ENCODE measurements at regions of chr14 and their contacts with region 1.

Region 1: GRCh38 chr14:100375963-100376735 is 53.0 kb downstream of the SLC25A47 start:
- DNase-seq: peak; percentile 96
- ATAC-seq: peak; percentile 70
- H3K4me3 Mint-ChIP-seq: peak within 1 kb of the TSS; percentile 99
- H3K27ac Mint-ChIP-seq: peak within 1 kb of the TSS; percentile 98
- H3K4me1 Mint-ChIP-seq: peaks cover 37% of the 10 kb centered on the region
- H3K27me3 Mint-ChIP-seq: no peaks in the 10 kb centered on the region

Region 2: GRCh38 chr14:99480917-99481744 is 895.0 kb before region 1 on chr14 and contains the start of gene CCNK:
- CTCF ChIA-PET with region 1: no interaction called
- POLR2A ChIA-PET with region 1: no interaction called
- intact Hi-C with region 1: loop called (anchors 2 to 10 kb)
- DNase-seq: peak; percentile 100
- ATAC-seq: peak; percentile 95
- H3K4me3 Mint-ChIP-seq: peak within 1 kb of the TSS; percentile 97
- H3K27ac Mint-ChIP-seq: peak within 1 kb of the TSS; percentile 96
- H3K4me1 Mint-ChIP-seq: peaks cover 58% of the 10 kb centered on the region
- H3K27me3 Mint-ChIP-seq: no peaks in the 10 kb centered on the region
- total RNA-seq, gene CCNK: 93.7 to 96.2 TPM

Region 3: GRCh38 chr14:99971087-99971940 is 404.8 kb before region 1 on chr14:
- CTCF ChIA-PET with region 1: no interaction called
- POLR2A ChIA-PET with region 1: no interaction called
- intact Hi-C with region 1: loop called in 1 of 2 experiments (anchors 1 kb)
- DNase-seq: peak; percentile 93
- ATAC-seq: peak; percentile 87
- H3K4me3 Mint-ChIP-seq: peak overlapping the region; percentile 98
- H3K27ac Mint-ChIP-seq: no peak overlapping the region
- H3K4me1 Mint-ChIP-seq: peaks cover 21% of the 10 kb centered on the region
- H3K27me3 Mint-ChIP-seq: peaks cover 21% of the 10 kb centered on the region

Region 4: GRCh38 chr14:99982537-99983250 is 393.5 kb before region 1 on chr14:
- CTCF ChIA-PET with region 1: no interaction called
- POLR2A ChIA-PET with region 1: no interaction called
- intact Hi-C with region 1: no loop called
- DNase-seq: peak; percentile 77
- ATAC-seq: peak; percentile 94
- H3K4me3 Mint-ChIP-seq: no peak overlapping the region
- H3K27ac Mint-ChIP-seq: peak overlapping the region; percentile 9
- H3K4me1 Mint-ChIP-seq: peaks cover 14% of the 10 kb centered on the region
- H3K27me3 Mint-ChIP-seq: no peaks in the 10 kb centered on the region

Region 5: DNA sequence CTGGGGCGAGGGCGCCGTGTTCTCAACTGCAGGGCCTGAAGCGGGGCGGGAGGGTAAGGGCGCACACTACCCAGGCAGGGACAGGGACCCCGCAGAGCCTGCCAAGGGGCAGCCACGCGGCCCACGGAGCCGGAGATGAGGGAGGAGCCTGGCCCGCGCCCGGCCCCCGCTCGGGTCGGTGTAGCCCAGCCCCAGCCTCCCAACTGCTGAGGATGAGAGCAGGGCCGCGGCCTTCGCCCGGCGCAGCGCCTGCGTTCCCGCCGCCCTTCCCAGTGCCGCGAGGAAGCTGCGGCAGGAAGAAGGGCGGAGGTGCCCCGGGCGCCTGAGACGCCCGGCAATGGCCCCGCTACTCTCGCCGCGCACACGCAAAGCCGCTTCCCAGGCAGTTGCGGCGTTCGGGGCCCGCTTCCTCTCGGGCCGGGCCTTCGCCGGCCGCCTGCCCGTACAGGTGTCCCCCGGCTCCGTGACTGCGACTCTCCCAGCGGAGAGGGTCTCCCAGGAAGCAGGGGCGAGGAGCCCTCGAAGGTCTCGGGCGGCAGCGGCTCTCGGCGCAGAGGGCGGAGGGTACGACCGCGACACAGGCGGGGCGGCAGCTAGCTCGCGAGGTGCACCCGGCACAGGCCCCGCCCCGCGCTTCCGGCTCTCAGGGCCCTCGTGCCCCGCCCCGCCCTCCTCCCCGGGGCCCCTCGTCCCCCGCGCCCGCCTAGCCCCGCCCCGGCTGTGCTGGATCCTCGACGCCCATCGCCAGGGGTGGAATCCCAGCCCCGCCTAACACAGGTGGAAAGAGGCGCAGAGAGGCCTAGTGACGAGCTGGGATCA is 162.0 kb before region 1 on chr14:
- CTCF ChIA-PET with region 1: interaction called, 4 read pairs
- POLR2A ChIA-PET with region 1: no interaction called
- intact Hi-C with region 1: loop called in 1 of 2 experiments (anchors 1 kb)
- DNase-seq: peak; percentile 97
- ATAC-seq: peak; percentile 96
- H3K4me3 Mint-ChIP-seq: peak overlapping the region; percentile 79
- H3K27ac Mint-ChIP-seq: peak overlapping the region; percentile 87
- H3K4me1 Mint-ChIP-seq: peaks cover 23% of the 10 kb centered on the region
- H3K27me3 Mint-ChIP-seq: no peaks in the 10 kb centered on the region

Region 6: DNA sequence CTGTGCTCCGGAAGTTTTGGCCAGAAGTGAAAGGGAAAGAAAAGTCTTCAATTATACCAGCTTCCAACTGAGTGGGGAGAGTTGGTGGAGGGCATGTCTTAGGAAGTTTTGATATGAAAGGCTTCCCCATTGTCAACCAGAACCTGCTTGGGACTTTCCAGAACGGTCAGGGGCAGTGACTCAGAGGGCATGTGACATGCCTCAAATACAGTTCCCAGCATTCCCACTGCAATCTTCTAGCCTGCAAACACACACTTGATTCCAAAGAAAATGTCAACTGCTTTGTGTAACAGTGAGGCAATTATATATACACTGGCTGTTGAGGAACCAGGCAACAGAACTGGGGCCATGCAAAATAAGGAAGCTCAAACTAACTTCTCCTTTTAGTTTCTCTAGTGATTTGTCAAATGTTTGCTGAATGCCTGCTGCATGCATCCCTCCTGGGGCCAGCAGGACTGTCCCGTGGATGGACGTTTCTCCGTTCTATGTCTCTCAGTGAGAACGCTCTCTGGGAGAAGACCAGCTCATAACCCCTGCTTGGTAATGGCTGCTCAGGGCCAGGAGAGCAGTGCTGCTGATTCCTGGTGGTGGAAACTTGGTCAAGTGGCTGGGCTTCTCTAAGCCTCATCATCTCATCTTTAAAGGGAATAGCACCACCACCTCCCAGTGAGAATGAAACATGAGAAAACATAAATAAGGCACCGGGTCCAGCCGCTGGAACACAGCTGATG is 34.7 kb before region 1 on chr14:
- CTCF ChIA-PET with region 1: no interaction called
- POLR2A ChIA-PET with region 1: interaction called, 4 read pairs
- intact Hi-C with region 1: loop called (anchors 5 kb)
- DNase-seq: peak; percentile 61
- ATAC-seq: peak; percentile 68
- H3K4me3 Mint-ChIP-seq: no peak overlapping the region
- H3K27ac Mint-ChIP-seq: peak overlapping the region; percentile 56
- H3K4me1 Mint-ChIP-seq: peaks cover 41% of the 10 kb centered on the region
- H3K27me3 Mint-ChIP-seq: no peaks in the 10 kb centered on the region

Region 7: DNA sequence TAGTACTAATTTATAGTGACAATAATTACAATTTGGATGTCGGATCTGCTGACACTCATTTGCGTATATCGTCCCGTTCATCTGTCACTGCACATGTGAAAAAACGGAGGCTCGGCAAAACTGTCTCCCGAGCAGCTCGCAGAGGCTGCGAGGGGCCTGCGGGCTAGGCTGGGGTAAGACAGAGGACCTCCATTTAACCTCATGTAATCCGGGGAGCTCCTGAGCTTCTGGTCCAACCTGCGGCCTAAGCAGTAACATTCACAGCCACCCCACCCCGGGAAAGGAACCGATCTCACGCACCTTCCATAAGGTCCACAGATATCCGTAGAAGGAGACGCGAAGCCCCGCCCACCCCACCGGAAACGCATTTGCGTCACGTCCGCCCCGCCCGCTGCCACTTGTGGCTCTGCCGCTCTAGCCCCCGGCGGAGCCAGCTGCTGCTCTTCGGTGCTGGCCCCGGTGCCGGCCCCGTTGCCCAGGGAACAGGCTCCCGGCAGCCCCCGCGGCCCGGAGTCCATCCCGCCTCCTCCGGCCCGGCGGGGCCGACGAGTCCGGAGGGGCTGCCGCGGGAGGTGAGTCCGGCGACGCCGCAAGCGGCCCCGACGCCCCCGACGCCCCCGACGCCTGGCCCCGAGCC is 1986.5 kb after region 1 on chr14 and contains the starts of genes CINP and TECPR2:
- CTCF ChIA-PET with region 1: no interaction called
- POLR2A ChIA-PET with region 1: no interaction called
- intact Hi-C with region 1: loop called in 1 of 2 experiments (anchors 5 kb)
- DNase-seq: peak; percentile 99
- ATAC-seq: peak; percentile 78
- H3K4me3 Mint-ChIP-seq: no peak within 1 kb of the TSS
- H3K27ac Mint-ChIP-seq: peak within 1 kb of the TSS; percentile 96
- H3K4me1 Mint-ChIP-seq: peaks cover 36% of the 10 kb centered on the region
- H3K27me3 Mint-ChIP-seq: no peaks in the 10 kb centered on the region
- total RNA-seq, gene CINP: 47.0 to 51.4 TPM
- total RNA-seq, gene TECPR2: 5.6 to 6.9 TPM

Measured in activated CD4-positive, alpha-beta T cell treated with anti-CD3 and anti-CD28 coated beads for 36 hours (primary cell).